ENCODE measurements at regions of chr16 and their contacts with region 1.

Region 1: DNA sequence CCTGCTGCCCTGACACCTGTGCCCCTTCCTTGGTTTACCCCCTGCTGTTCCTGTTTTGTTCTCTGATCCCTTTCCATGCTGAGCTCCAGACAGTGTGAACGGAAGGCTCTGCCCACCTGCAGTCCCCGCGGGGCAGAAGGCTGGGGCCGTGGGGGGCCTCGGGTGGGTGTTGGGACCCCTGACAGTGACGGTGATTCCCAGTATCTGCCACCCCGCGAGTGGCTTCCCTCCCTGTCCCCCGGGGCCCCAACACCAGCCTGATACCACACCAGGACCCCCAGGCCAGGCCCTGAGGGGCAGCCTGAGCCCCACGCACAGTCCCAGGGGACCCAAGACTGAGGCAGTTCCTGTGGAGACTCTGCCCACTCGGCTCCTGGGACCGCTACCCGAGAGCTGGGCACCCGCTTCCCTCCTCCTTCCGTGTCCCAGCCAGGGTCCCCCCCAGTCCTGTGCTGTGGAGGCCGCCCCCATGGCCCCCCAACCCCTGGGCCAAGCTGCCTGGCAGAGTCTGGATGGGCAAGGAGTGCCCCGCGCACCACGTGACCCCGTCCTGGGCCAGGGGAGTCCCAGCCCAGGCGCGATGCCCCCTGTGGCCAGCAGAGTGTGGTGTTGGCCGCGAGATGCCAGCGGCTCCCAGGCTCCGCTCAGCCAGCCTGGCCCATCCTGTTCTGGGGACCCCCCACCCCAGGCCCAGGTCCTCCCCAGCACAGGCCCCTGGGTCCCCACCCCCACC is 10.0 kb upstream of the C1QTNF8 start:
- DNase-seq: peak; percentile 83 to 85
- H3K4me3 ChIP-seq: no peak overlapping the region
- H3K27ac ChIP-seq: no peak overlapping the region
- H3K4me1 ChIP-seq: peaks cover 3 to 5% of the 10 kb centered on the region in 2 donors
- H3K27me3 ChIP-seq: no peaks in the 10 kb centered on the region
- CTCF ChIP-seq: peak; percentile 65 to 94 (median 82)
- POLR2A ChIP-seq: no peak

Region 2: DNA sequence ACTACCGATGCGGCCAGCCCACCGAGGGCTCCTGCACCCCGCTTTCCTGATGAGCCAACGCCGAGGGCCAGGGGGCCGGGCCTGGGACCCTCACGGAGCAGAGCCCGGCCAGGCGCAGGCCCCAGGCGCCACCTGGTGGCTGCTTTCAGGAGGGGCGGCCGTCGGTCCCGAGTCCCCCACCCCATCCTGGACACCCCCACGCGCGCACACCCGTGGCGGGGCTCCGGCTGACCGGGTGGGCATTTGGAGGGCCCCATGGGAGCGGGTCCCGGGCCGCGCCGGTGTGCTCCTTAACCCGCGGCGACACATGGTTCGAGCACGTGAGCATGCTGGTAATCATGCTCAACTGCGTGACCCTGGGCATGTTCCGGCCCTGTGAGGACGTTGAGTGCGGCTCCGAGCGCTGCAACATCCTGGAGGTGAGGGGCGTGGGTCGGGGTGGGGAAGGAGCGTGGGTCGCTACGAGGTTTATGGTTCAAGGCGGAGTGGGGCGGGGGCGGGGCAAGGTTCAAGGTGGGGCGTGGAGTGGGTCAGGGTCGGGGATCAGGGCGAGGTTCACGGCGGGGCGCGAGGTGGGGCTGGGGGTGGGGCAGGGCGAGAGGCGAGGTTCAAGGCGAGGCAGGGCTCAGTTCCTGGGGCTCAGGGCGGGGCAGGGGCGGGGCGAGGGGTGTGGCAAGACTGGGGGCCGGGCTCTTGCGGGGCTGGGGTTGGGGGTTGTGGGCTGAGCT is 88.8 kb after region 1 on chr16:
- intact Hi-C with region 1: loop called (anchors 2 kb)
- DNase-seq: peak; percentile 21 to 34
- H3K4me3 ChIP-seq: no peak overlapping the region
- H3K27ac ChIP-seq: no peak overlapping the region
- H3K4me1 ChIP-seq: peaks cover 4 to 5% of the 10 kb centered on the region in 2 donors
- H3K27me3 ChIP-seq: no peaks in the 10 kb centered on the region
- CTCF ChIP-seq: peak; percentile 70 to 93 (median 84)
- POLR2A ChIP-seq: no peak